Heart right ventricle (tissue), 16 donors: ENCODE measurements at regions of chr1 and their contacts with region 1.

Region 1: GRCh38 chr1:238982736-238983135 is 403.6 kb upstream of the CHRM3 start:
- DNase-seq: no peak
- ATAC-seq: no peak
- H3K4me3 ChIP-seq: no peak overlapping the region
- H3K27ac ChIP-seq: no peak overlapping the region
- H3K4me1 ChIP-seq: no peaks in the 10 kb centered on the region
- H3K27me3 ChIP-seq: no peaks in the 10 kb centered on the region
- CTCF ChIP-seq: no peak

Region 2: GRCh38 chr1:238777551-238777950 is 205.2 kb before region 1 on chr1:
- intact Hi-C with region 1: no loop called
- DNase-seq: no peak
- ATAC-seq: no peak
- H3K4me3 ChIP-seq: no peak overlapping the region
- H3K27ac ChIP-seq: no peak overlapping the region
- H3K4me1 ChIP-seq: no peaks in the 10 kb centered on the region
- H3K27me3 ChIP-seq: no peaks in the 10 kb centered on the region
- CTCF ChIP-seq: no peak

Region 3: DNA sequence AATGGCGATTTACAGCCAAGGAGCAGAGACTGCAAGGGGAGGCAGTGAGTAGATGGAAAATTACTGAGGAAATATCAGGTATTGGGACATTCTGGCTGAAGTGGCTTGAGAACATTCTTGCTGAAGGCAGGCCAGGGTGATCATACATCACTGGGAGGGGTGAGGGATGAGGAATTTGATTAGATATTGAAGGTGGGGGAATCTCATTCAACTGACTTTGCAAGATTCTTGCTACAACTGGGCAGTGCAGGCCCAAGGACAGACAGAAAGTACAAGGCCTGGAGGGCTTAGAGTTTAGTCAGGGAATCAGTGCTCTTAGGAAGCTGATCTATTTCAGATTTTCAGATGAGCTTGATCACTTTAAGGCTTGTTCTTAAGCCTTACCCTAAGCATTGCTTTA is 166.6 kb before region 1 on chr1:
- intact Hi-C with region 1: no loop called
- DNase-seq: no peak
- ATAC-seq: no peak
- H3K4me3 ChIP-seq: no peak overlapping the region
- H3K27ac ChIP-seq: no peak overlapping the region
- H3K4me1 ChIP-seq: no peaks in the 10 kb centered on the region
- H3K27me3 ChIP-seq: no peaks in the 10 kb centered on the region
- CTCF ChIP-seq: no peak

Region 4: GRCh38 chr1:238999944-239000343 is 17.2 kb after region 1 on chr1:
- intact Hi-C with region 1: loop called in 1 of 10 experiments (anchors 2 kb)
- DNase-seq: no peak
- ATAC-seq: no peak
- H3K4me3 ChIP-seq: no peak overlapping the region
- H3K27ac ChIP-seq: no peak overlapping the region
- H3K4me1 ChIP-seq: no peaks in the 10 kb centered on the region
- H3K27me3 ChIP-seq: no peaks in the 10 kb centered on the region
- CTCF ChIP-seq: no peak